ENCODE measurements at regions of chr6 and their contacts with region 1.

Region 1: DNA sequence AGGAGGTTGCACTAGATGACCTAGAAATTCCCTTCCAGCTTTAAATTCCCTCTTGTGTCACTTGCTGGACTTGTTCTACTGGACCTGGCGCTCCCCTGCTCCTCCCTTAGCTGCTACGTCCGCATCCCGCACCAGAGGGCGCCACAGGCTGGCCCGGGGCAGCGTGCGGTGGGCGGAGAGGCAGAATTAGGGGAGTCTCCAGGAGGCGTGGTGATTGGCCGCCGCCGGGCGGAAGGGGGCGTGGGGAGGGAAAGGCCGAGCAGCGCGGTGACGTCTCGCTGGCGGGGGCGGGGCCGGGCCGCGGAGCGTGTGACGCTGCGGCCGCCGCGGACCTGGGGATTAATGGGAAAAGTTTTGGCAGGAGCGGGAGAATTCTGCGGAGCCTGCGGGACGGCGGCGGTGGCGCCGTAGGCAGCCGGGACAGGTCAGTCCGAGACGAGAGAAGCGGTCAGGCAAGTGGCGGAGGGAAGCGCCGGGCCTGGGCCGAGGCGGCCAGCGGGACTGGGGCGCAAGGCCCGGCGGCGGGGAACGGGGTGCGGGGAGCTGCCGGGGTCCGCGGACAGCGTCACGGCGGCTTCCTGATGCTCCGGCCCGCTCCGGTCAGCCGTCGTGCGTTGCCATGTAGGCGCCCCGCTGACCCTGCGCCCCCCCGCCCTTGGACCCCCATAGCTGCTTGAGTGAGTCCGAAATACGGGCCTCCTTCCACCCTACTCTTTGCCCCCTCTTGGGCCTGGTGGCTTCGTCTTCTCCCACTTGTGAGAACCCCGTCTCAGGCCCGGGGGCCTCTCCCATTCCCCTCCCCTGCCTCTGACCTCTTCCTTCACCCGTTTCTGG is at the start of gene PPARD:
- DNase-seq: peak; percentile 96
- H3K4me3 ChIP-seq: peak within 1 kb of the TSS; percentile 63 to 73 (median 68)
- H3K27ac ChIP-seq: peak within 1 kb of the TSS; percentile 77
- H3K4me1 ChIP-seq: peaks cover 22% of the 10 kb centered on the region
- H3K27me3 ChIP-seq: no peaks in the 10 kb centered on the region
- CTCF ChIP-seq: peak; percentile 92 to 99
- total RNA-seq, gene PPARD: 6.8 to 47.1 TPM

Region 2: GRCh38 chr6:34934516-34934915 is 408.0 kb before region 1 on chr6:
- CTCF ChIA-PET with region 1: no interaction called
- dilution Hi-C with region 1: no loop called
- in situ Hi-C with region 1: no loop called
- intact Hi-C with region 1: no loop called
- DNase-seq: peak; percentile 9
- H3K4me3 ChIP-seq: no peak overlapping the region
- H3K27ac ChIP-seq: no peak overlapping the region
- H3K4me1 ChIP-seq: no peaks in the 10 kb centered on the region
- H3K27me3 ChIP-seq: no peaks in the 10 kb centered on the region
- CTCF ChIP-seq: no peak

Region 3: GRCh38 chr6:35297601-35298481 is 44.6 kb before region 1 on chr6 and contains the start of gene DEF6:
- CTCF ChIA-PET with region 1: no interaction called
- dilution Hi-C with region 1: no loop called
- in situ Hi-C with region 1: no loop called
- intact Hi-C with region 1: loop called (anchors 1 kb)
- DNase-seq: peak; percentile 90
- H3K4me3 ChIP-seq: peak within 1 kb of the TSS; percentile 66 to 85 (median 76)
- H3K27ac ChIP-seq: peak within 1 kb of the TSS; percentile 80
- H3K4me1 ChIP-seq: peaks cover 35% of the 10 kb centered on the region
- H3K27me3 ChIP-seq: no peaks in the 10 kb centered on the region
- CTCF ChIP-seq: peak; percentile 92 to 98
- total RNA-seq, gene DEF6: 12.8 to 32.9 TPM

Region 4: DNA sequence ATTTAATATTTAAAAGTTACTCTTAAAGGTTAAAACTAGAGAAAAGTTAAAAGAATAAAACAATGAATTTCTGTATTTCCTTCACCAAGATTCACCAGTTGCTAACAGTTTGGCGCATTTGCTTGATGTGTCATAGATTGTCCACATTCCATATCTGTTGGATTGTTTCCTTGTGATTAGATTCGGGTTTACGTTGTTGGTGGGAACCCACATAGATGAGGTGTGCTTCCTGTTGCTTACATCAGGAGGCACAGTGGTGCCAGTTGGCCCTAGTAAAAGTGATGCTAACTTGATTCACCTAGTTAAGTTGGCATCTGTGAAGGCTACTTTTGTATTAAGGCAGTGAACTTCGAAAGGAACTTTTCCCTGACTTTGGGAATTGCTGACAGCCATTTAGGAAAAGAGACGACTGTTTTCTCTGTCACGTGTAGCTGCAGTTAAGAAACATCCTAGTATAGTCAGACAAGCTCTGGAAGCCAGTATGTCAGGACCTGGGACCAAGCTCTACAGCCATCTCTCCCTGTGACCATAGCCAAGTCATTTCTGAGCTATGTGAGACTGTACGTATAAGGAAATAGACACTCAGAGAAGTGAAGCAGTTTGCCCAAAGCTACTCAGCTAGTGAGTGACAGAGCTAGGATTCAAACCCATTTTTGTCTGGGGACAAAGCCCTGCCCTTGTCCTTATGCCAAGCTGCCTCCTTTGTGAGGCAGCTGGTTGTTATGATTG is 48.9 kb after region 1 on chr6:
- CTCF ChIA-PET with region 1: no interaction called
- dilution Hi-C with region 1: no loop called
- in situ Hi-C with region 1: no loop called
- intact Hi-C with region 1: loop called (anchors 1 kb)
- DNase-seq: peak; percentile 97
- H3K4me3 ChIP-seq: no peak overlapping the region
- H3K27ac ChIP-seq: peak overlapping the region; percentile 96
- H3K4me1 ChIP-seq: peaks cover 51% of the 10 kb centered on the region
- H3K27me3 ChIP-seq: no peaks in the 10 kb centered on the region
- CTCF ChIP-seq: peak; percentile 4 to 50

Region 5: DNA sequence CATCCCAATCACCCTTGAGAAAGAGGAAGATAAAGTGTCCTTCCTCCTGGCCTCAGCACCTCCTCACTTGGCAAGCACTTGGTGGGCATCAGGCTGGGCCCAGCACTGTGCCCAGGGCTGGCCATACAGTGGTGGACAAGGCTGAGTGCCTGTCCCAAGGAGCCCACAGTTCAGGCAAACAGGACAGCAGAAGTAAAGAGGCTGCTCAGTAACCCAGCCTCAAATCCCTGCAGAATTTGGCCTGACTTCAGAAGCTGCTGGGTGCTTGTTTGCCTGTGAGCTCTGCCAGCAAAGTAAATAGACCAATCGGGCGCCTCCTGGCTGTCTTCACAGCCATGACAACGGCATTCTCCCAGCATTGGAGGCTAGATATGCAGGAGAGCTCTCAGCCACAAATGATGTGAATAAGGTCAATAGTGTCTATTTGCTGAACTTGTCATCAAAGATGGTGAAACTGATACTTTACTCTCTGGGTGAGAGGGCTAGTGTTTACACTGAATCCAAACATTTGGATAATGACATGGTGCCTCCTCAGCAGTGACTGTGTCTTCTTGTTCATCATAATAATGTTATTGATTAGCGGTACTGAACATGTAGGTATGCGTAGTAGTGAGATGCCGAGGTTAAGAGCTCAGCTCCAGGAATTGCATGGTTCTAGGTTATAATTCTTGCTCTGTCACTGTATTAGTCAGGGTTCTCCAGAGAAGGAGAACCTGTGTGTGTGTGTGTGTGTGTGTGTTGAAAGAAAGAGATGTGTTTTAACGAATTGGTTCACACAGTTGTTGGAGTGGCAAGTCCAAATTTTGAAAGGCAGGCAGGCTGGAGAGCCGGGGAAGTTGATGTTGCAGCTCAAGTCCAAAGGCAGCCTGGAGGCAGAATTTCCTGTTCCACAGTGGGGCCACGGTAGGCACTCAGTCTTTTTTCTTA is 72.9 kb after region 1 on chr6:
- CTCF ChIA-PET with region 1: interaction called, 6 read pairs
- dilution Hi-C with region 1: no loop called
- in situ Hi-C with region 1: no loop called
- intact Hi-C with region 1: loop called (anchors 1 kb)
- DNase-seq: peak; percentile 63
- H3K4me3 ChIP-seq: no peak overlapping the region
- H3K27ac ChIP-seq: no peak overlapping the region
- H3K4me1 ChIP-seq: peaks cover 7% of the 10 kb centered on the region
- H3K27me3 ChIP-seq: no peaks in the 10 kb centered on the region
- CTCF ChIP-seq: peak; percentile 70 to 74

Region 6: GRCh38 chr6:35452186-35453090 is 110.0 kb after region 1 on chr6 and contains the start of gene FANCE:
- CTCF ChIA-PET with region 1: interaction called, 9 read pairs
- dilution Hi-C with region 1: no loop called
- in situ Hi-C with region 1: loop called (anchors 5 to 10 kb)
- intact Hi-C with region 1: loop called (anchors 1 kb)
- DNase-seq: peak; percentile 88
- H3K4me3 ChIP-seq: peak within 1 kb of the TSS; percentile 59 to 80 (median 61)
- H3K27ac ChIP-seq: peak within 1 kb of the TSS; percentile 28
- H3K4me1 ChIP-seq: peaks cover 26% of the 10 kb centered on the region
- H3K27me3 ChIP-seq: no peaks in the 10 kb centered on the region
- CTCF ChIP-seq: no peak
- total RNA-seq, gene FANCE: 3.7 to 12.8 TPM

Region 7: DNA sequence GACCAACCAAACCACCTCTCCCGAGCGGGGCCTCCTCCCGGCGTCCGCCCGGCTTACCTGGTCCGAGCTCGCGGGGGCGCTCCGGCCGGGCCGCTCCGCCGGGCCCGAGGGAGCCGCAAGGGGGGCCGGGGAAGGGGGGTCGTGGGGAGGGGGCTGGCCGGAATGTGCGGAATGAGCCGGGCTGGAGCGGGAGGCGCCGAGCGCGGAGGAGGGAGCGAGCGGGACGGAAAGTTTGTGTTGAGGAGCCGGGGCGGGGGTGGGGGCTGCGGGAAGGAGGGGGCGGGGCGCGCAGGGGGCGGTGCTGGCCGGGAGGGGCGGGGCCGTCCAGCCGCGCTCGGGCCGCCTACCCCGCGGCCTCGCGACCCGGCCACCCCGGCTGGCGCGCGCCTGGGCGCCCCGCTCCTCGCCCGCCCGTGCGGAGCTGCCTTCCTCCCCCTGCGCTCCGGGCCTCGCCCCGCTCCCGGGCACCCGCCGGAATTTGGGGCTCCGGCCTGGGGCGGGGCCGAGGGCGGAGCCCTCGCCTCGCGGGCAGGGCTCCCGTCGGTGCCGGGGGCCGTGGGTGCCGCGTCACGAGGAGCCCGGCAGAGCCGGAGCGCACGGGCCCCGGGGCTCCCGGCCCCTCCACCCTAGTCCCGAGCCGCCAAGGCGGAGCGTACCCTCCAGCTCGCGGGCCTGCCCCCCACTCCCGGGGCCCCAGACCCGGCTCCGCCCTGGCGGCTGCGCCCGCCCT is 154.5 kb after region 1 on chr6 and contains the start of gene TEAD3:
- CTCF ChIA-PET with region 1: no interaction called
- dilution Hi-C with region 1: loop called (anchors 10 kb)
- in situ Hi-C with region 1: no loop called
- intact Hi-C with region 1: no loop called
- DNase-seq: peak; percentile 76
- H3K4me3 ChIP-seq: peak within 1 kb of the TSS; percentile 69 to 88 (median 78)
- H3K27ac ChIP-seq: peak within 1 kb of the TSS; percentile 85
- H3K4me1 ChIP-seq: peaks cover 37% of the 10 kb centered on the region
- H3K27me3 ChIP-seq: no peaks in the 10 kb centered on the region
- CTCF ChIP-seq: peak in 1 of 2 donors; percentile 26
- total RNA-seq, gene TEAD3: 12.5 to 26.4 TPM

Region 8: DNA sequence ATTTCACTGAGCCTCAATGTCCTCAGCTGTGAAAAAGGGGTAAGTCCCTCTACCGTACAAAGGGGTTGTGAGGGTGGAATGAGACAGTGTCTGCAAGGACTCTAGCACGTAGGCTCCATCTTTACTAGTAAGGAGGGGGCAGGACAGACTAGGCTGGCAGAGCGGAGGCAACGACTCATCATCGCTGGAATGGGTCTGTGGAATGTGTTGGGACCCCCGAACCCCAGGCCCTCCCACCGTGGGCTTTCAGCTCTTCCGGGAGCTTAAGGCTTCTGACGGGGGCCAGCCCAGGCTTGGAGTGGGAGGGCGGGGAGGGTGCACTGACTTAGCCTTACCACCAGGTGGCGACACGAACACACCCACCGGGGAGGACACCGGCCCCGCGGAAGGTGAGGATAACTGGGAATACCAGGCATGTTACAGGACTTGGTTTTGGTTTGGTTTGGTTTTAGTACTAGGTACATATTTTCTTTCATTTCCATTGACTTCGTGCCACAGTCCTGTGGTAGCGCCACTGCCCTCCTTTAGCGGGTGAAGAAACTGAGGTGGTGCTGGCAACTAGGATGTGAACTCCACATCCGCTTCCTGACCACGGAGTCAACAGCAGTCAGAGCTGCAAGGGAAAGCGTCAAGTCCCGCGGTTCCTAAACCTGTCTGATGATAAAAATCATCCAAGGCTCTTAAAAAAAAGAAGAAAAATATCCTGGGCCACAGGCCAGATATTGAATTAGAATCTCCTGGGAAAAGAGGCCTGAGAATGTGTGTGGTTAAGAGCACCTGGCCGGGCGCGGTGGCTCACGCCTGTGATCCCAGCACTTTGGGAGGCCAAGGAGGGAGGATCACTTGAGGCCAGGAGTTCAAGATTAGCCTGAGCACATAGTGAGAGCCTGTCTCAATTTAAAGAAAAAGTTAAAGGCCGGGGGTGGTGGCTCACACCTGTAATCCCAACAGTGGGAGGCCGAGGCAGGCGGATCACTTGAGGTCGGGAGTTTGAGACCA is 180.5 kb after region 1 on chr6:
- CTCF ChIA-PET with region 1: no interaction called
- dilution Hi-C with region 1: no loop called
- in situ Hi-C with region 1: no loop called
- intact Hi-C with region 1: no loop called
- DNase-seq: peak; percentile 59
- H3K4me3 ChIP-seq: peak overlapping the region in 1 of 3 experiments; percentile 21
- H3K27ac ChIP-seq: no peak overlapping the region
- H3K4me1 ChIP-seq: peaks cover 9% of the 10 kb centered on the region
- H3K27me3 ChIP-seq: no peaks in the 10 kb centered on the region
- CTCF ChIP-seq: peak; percentile 73 to 94

Region 9: GRCh38 chr6:35569011-35569461 is 226.6 kb after region 1 on chr6:
- CTCF ChIA-PET with region 1: no interaction called
- dilution Hi-C with region 1: loop called (anchors 10 kb)
- in situ Hi-C with region 1: no loop called
- intact Hi-C with region 1: no loop called
- DNase-seq: peak; percentile 23
- H3K4me3 ChIP-seq: no peak overlapping the region
- H3K27ac ChIP-seq: no peak overlapping the region
- H3K4me1 ChIP-seq: no peaks in the 10 kb centered on the region
- H3K27me3 ChIP-seq: no peaks in the 10 kb centered on the region
- CTCF ChIP-seq: peak; percentile 41 to 54